Gastrocnemius medialis (tissue), 4 donors: ENCODE measurements at regions of chr19 and their contacts with region 1.

Region 1: GRCh38 chr19:8456064-8456463 is 11.3 kb downstream of the HNRNPM start:
- DNase-seq: peak in 1 of 2 donors; percentile 35
- ATAC-seq: peak in 1 of 2 donors; percentile 18
- H3K4me3 ChIP-seq: no peak overlapping the region
- H3K27ac ChIP-seq: peak overlapping the region; percentile 24 to 74 (median 46)
- H3K4me1 ChIP-seq: peaks cover 98 to 99% of the 10 kb centered on the region in 2 donors
- H3K27me3 ChIP-seq: no peaks in the 10 kb centered on the region
- CTCF ChIP-seq: peak in 1 of 5 experiments; percentile 40
- POLR2A ChIP-seq: no peak

Region 2: GRCh38 chr19:8505680-8506401 is 49.8 kb after region 1 on chr19:
- in situ Hi-C with region 1: no loop called
- intact Hi-C with region 1: loop called (anchors 2 kb)
- DNase-seq: peak; percentile 61 to 88
- ATAC-seq: peak; percentile 90 to 91
- H3K4me3 ChIP-seq: peak overlapping the region; percentile 55 to 71 (median 68)
- H3K27ac ChIP-seq: peak overlapping the region; percentile 71 to 80 (median 72)
- H3K4me1 ChIP-seq: peaks cover 5 to 11% of the 10 kb centered on the region in 2 donors
- H3K27me3 ChIP-seq: no peaks in the 10 kb centered on the region
- CTCF ChIP-seq: peak; percentile 77 to 93 (median 91)
- POLR2A ChIP-seq: peak; percentile 31 to 48